PC-3 (cell line): ENCODE measurements at regions of chr12 and their contacts with region 1.

Region 1: DNA sequence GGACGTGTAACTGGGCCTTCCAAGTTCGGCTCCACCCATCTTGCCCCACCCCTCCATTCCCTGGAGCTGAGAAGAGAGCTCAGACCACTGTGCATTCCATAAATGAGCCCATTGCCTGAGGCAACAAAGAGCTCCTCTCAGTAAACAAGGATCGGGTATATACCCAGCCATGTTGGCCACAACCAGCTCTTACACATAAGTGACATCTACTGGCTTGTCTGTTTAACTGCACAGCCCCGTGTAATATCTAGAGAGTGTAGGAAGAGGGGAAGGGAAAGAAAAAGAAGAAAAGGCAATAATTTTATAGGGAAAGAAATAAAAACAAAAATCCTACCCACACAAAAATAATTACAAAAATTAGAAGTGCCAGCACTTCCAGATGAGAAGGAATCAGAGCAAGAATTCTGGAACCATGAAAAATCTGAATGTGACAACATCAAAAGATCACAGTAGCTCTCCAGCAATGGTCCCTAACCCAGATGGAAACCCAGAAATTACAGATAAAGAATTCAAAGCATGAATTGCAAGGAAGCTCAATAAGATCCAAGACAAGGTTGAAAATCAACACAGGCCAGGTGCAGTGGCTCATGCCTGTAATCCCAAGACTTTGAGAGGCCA is 308.1 kb downstream of the RPAP3 start:
- DNase-seq: peak; percentile 94
- ATAC-seq: peak; percentile 88
- H3K4me3 ChIP-seq: no peak overlapping the region
- H3K27ac ChIP-seq: no peak overlapping the region
- H3K4me1 ChIP-seq: peaks cover 25% of the 10 kb centered on the region
- H3K27me3 ChIP-seq: no peaks in the 10 kb centered on the region
- CTCF ChIP-seq: peak; percentile 93

Region 2: GRCh38 chr12:47207340-47207717 is 190.4 kb before region 1 on chr12:
- CTCF ChIA-PET with region 1: no interaction called
- POLR2A ChIA-PET with region 1: no interaction called
- intact Hi-C with region 1: loop called (anchors 5 kb)
- DNase-seq: no peak
- ATAC-seq: no peak
- H3K4me3 ChIP-seq: no peak overlapping the region
- H3K27ac ChIP-seq: no peak overlapping the region
- H3K4me1 ChIP-seq: peaks cover 12% of the 10 kb centered on the region; the same call in 1 of the 2 replicates
- H3K27me3 ChIP-seq: no peaks in the 10 kb centered on the region
- CTCF ChIP-seq: no peak